Activated B cell treated with CpG ODN at 0.5 μM for 24 hours (primary cell): ENCODE measurements at regions of chr3 and their contacts with region 1.

Region 1: GRCh38 chr3:185896561-185897011 is 41.2 kb downstream of the TRA2B start:
- DNase-seq: no peak
- ATAC-seq: no peak
- H3K4me3 Mint-ChIP-seq: no peak overlapping the region
- H3K27ac Mint-ChIP-seq: no peak overlapping the region
- H3K4me1 Mint-ChIP-seq: no peaks in the 10 kb centered on the region
- H3K27me3 Mint-ChIP-seq: peaks cover 11% of the 10 kb centered on the region
- CTCF ChIP-seq: no peak

Region 2: GRCh38 chr3:185846037-185846436 is 50.5 kb before region 1 on chr3:
- CTCF ChIA-PET with region 1: no interaction called
- POLR2A ChIA-PET with region 1: no interaction called
- intact Hi-C with region 1: no loop called
- DNase-seq: no peak
- ATAC-seq: no peak
- H3K4me3 Mint-ChIP-seq: no peak overlapping the region
- H3K27ac Mint-ChIP-seq: no peak overlapping the region
- H3K4me1 Mint-ChIP-seq: no peaks in the 10 kb centered on the region
- H3K27me3 Mint-ChIP-seq: peaks cover 18% of the 10 kb centered on the region
- CTCF ChIP-seq: no peak

Region 3: GRCh38 chr3:186526256-186526606 is 629.6 kb after region 1 on chr3:
- CTCF ChIA-PET with region 1: no interaction called
- POLR2A ChIA-PET with region 1: interaction called, 15 read pairs
- intact Hi-C with region 1: no loop called
- DNase-seq: peak; percentile 50
- ATAC-seq: peak; percentile 80
- H3K4me3 Mint-ChIP-seq: peak overlapping the region; percentile 55
- H3K27ac Mint-ChIP-seq: peak overlapping the region; percentile 86
- H3K4me1 Mint-ChIP-seq: peaks cover 85% of the 10 kb centered on the region
- H3K27me3 Mint-ChIP-seq: peaks cover 2% of the 10 kb centered on the region
- CTCF ChIP-seq: no peak